ENCODE measurements at regions of chr2 and their contacts with region 1.

Region 1: GRCh38 chr2:130355578-130356431 is at the start of gene PTPN18:
- DNase-seq: peak; percentile 75 to 98 (median 88)

Region 2: GRCh38 chr2:130372055-130372832 is 16.4 kb after region 1 on chr2:
- intact Hi-C with region 1: loop called (anchors 1 kb)
- DNase-seq: peak; percentile 78 to 99 (median 86)

Measured in posterior cingulate gyrus (tissue), 11 donors.